AG04449 (cell line): ENCODE measurements at regions of chr2 and their contacts with region 1.

Region 1: DNA sequence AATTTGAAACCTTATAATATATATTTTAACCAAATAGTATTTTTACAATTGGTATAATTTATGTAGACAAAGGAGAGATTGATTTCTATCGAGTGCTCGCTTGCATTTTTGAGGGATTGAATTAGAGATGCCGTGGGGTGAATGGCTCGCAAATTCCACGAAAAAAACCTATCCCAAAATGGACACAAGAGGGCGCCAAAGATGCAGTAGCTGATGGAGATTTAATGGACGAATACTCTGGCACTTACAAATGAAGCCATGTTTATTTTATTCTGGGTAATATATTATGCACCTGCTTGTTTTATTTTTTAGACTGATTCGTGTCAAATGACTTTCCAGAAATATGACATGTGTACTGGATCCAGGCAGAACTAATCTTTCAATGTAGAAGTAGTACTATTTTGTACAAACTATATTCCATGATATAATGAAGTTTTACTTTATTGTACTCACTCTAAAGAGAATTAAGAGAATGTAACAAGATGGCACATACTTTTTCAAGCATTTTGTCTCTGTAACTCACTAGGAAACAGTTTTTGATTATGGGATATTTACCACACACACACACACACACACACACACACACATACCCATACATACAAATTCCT is 505.4 kb downstream of the PLCL1 start:
- DNase-seq: no peak
- H3K4me3 ChIP-seq: no peak overlapping the region
- CTCF ChIP-seq: peak; percentile 72

Region 2: DNA sequence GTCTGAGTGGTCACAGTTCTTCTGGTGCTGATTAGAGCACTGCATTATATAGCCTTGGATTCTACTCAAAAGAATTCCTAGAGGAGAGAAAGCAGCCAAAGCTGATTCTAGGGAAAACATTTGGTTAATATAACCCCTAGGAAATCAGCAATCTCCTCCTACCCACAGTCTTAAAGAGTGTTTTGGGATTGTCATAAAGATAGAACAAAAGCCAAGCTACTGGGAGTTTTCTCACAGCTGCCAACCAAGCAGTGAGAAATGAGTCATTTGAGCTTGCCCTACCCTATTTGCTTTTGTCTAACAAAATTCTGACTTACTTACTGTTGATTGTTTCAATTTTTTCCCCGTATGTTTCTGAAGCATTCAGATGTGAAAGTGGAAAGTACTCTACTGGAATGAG is 36.1 kb before region 1 on chr2:
- CTCF ChIA-PET with region 1: no interaction called
- POLR2A ChIA-PET with region 1: no interaction called
- DNase-seq: no peak
- H3K4me3 ChIP-seq: no peak overlapping the region
- CTCF ChIP-seq: no peak

Region 3: DNA sequence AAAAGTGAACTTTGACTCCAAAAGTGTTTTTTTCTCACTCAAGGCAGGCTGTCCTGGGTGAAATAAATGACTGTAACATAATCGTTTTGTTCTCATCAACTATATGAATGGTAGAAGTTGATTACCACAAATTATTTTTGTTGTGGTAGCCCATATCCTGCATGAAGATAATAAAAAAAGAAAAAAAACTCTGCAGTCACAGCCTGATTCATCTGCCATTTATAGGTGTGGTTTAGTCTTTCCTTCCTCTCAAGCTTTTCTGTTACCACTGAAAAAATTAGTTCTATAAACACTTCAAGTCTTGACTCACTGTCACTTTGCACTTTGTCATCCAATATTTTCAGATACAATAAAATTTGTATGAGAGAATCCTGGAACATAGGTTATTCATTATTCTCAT is 16.7 kb after region 1 on chr2:
- CTCF ChIA-PET with region 1: interaction called, 36 read pairs
- POLR2A ChIA-PET with region 1: no interaction called
- DNase-seq: no peak
- H3K4me3 ChIP-seq: no peak overlapping the region
- CTCF ChIP-seq: no peak

Region 4: DNA sequence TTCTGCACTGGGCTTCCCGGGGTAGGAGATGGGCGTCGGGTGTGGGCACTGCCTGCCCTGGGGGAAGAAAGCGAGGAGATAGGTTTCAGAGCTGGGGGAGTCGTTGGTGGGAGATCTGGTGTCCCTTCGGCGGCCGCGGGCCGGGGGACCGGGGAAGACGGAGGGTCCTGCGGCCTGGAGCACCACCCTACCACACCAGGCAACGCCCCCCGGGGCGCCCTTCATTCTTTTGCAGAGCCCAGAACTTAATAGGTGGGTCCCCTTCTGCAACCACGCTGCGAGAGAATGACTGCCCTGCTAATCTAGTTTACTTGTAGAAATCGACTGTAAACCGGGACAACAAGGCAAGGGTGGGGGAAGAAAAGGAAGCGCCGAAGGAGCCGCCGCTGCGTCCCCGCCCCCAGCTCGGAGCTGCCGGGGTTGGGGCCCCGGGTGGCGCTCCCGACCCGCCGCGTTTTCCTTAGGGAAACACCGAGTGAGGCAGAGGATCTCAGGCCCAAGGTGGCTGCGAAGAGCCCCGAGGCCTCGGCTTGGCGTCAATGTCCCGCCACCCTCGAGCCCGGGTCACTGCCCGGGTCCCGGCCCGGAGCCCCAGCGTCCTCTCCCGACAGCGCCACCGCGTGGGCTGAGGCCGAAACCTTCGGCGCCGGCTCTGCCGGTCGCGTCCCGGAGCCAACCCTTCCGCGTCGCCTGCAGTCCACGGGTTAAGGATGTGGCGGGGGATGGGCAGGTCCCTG is 1153.3 kb after region 1 on chr2:
- CTCF ChIA-PET with region 1: interaction called, 27 read pairs
- POLR2A ChIA-PET with region 1: no interaction called
- DNase-seq: no peak
- H3K4me3 ChIP-seq: peak overlapping the region; percentile 67
- CTCF ChIP-seq: peak; percentile 96

Region 5: DNA sequence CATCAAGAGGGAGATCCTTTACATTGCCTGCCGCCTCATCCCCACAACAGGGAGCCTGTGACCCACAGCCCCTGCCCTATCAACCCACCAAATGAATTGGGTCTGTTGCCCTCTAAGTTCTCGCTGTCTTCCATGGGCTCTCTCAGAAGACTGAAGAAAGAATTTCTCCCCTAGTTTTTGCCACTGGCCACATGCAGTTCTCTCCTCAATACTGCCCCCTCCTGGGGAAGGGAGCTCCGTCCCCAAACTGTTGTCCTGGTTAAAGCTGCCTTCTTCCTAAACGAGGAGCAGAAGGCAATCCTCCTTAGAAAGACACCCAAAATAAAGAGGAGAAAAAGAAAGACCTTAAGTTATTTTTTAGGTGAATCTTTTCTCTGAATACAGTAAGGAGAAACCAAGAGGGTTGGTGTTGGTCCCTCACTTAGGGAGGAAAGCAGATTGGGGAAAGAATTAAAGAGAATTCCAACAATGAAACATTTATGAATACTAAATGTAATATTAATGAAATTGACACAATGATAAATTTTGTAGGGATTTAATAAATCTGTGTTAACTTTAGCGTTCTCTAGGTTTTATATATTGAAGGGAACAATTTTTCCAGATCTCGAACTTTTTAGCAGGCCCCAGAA is 1179.1 kb after region 1 on chr2:
- CTCF ChIA-PET with region 1: interaction called, 348 read pairs
- POLR2A ChIA-PET with region 1: no interaction called
- DNase-seq: no peak
- H3K4me3 ChIP-seq: no peak overlapping the region
- CTCF ChIP-seq: peak; percentile 89

Region 6: GRCh38 chr2:199739413-199740110 is 1429.8 kb after region 1 on chr2:
- CTCF ChIA-PET with region 1: interaction called, 45 read pairs
- POLR2A ChIA-PET with region 1: no interaction called
- DNase-seq: no peak
- H3K4me3 ChIP-seq: no peak overlapping the region
- CTCF ChIP-seq: peak; percentile 73